ENCODE measurements at regions of chr10 and their contacts with region 1.

Region 1: GRCh38 chr10:105706281-105707026 is 1065.4 kb downstream of the SORCS3 start:
- DNase-seq: no peak
- ATAC-seq: no peak

Region 2: DNA sequence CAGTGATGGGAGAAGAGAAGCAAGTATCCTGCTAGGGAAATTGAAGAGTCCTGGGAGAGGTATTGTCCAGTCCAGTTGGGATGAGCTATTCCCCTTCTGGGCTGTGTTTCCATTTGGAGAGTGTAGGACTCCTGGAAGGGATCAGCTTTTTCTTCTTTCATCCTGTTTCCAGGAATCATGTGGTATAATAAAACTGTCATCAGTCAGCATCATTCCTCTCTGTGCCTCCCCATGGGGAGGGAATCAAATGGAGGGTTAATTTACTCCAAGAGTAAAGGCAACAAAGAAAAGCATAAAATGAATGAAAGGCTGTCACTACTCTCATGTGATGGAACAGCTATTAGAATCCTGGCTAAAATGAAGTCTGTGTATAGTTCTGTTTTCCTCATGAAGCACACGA is 635.5 kb before region 1 on chr10:
- intact Hi-C with region 1: loop called in 1 of 2 experiments (anchors 10 kb)
- DNase-seq: no peak
- ATAC-seq: no peak

Measured in left cardiac atrium (tissue), 4 donors.